GM13976 (cell line): ENCODE measurements at regions of chr7 and their contacts with region 1.

Region 1: DNA sequence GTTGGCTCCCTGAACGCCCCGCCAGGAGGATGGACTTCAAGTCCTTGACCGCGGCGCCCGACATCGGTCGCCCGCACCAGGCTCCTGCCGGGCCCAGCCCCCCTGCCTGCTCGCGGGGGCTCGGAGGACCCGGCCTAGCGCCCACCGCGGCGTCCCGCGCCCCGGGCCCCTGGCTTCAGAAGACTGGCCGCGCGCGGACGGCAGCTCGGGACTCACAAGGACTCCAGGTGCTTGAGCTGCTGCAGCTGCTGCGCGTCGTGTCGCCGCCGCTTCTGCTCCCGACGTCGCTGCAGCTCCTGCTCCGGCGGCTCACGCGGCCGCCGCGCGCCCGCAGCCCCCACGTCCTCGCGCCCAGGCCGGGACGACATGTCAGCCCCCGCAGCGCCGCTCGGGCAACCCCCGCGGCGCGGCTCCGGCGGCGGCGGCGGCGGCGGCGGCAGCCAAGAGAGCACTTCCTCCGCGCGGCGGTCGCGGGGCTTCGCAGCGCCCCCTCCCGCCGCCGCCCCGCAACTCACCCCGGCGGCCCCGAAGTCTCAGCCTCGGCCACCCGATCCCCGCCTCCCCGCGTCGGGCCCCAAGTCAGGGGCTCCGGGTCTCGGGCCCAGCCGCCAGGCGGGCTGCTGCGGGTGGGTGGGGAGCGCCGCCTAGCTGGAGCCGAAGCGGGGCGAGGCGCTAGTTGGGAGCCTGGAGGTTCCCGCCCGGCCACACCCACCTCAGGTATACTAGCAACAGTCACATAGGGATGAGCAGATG is at the start of gene RP9:
- DNase-seq: peak; percentile 89
- CTCF ChIP-seq: peak; percentile 89

Region 2: DNA sequence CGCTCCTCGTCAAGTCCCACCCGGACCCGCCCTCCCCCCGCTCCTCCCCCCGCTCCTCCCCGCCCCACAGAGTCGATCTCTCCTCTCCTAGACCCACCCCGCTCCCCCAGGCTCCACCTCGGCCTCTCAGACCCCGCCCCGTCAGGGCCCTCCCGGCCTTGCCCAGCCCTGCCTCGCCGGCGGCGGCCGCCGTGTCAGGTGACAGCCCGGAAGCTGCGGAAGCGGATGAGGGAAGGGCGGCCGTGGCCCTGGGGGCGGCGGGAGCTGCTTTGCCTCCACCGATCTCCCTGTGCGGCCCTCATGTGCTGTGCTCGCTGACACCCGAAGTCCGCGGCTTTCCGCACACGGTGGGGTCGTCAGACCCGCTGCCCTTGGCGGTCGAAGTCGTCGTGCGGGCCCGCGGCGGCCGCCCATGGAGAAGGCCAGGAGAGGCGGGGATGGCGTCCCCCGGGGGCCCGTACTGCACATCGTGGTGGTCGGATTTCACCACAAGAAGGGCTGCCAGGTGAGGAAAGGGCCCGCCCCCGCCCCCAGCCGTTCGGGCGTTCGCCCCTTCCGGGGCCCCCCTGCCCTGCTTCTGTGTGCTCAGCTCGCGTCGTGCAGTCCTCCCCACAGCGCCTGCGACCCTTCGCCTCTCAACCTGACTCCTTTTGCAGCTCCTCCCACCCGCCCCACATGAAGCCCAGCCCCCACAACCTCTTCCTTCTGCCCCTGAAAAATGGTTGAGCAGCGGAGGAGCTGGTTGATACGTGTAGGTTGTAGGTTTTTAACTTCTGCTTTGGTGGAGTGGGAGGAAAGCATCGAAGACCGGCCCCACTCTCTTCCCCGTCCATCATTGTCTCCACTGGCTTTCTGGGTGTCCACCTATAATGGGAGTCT is 613.6 kb before region 1 on chr7 and contains the start of gene AVL9:
- in situ Hi-C with region 1: loop called (anchors 25 kb)
- DNase-seq: peak; percentile 98
- CTCF ChIP-seq: no peak

Region 3: GRCh38 chr7:32779167-32779566 is 330.0 kb before region 1 on chr7:
- in situ Hi-C with region 1: loop called (anchors 25 kb)
- DNase-seq: no peak
- CTCF ChIP-seq: no peak